GM12878 (cell line): ENCODE measurements at regions of chr4 and their contacts with region 1.

Region 1: GRCh38 chr4:81405894-81406401 is 65.8 kb downstream of the RASGEF1B start:
- DNase-seq: peak; percentile 13
- ATAC-seq: peak; percentile 89
- H3K4me3 ChIP-seq: no peak overlapping the region
- H3K27ac ChIP-seq: no peak overlapping the region
- H3K4me1 ChIP-seq: no peaks in the 10 kb centered on the region
- H3K27me3 ChIP-seq: no peaks in the 10 kb centered on the region
- CTCF ChIP-seq: peak; percentile 39 to 56 (median 48)
- EP300 ChIP-seq: no peak
- POLR2A ChIP-seq: no peak
- RAD21 ChIP-seq: peak; percentile 80

Region 2: GRCh38 chr4:81839347-81840042 is 433.5 kb after region 1 on chr4:
- CTCF ChIA-PET with region 1: interaction called, 5 read pairs
- POLR2A ChIA-PET with region 1: no interaction called
- RAD21 ChIA-PET with region 1: interaction called, 4 read pairs
- SMC1A ChIA-PET with region 1: interaction called, 4 read pairs
- in situ Hi-C with region 1: loop called (anchors 5 kb)
- intact Hi-C with region 1: loop called (anchors 1 kb)
- DNase-seq: no peak
- ATAC-seq: peak; percentile 21; the same call in 1 of the 3 replicates
- H3K4me3 ChIP-seq: no peak overlapping the region
- H3K27ac ChIP-seq: no peak overlapping the region
- H3K4me1 ChIP-seq: no peaks in the 10 kb centered on the region
- H3K27me3 ChIP-seq: no peaks in the 10 kb centered on the region; a peak in 1 of 4 replicates
- CTCF ChIP-seq: no peak
- EP300 ChIP-seq: no peak
- POLR2A ChIP-seq: no peak
- RAD21 ChIP-seq: no peak

Region 3: GRCh38 chr4:81844717-81845116 is 438.8 kb after region 1 on chr4:
- CTCF ChIA-PET with region 1: interaction called, 5 read pairs
- POLR2A ChIA-PET with region 1: no interaction called
- RAD21 ChIA-PET with region 1: interaction called, 4 read pairs
- SMC1A ChIA-PET with region 1: interaction called, 4 read pairs
- in situ Hi-C with region 1: loop called (anchors 5 kb)
- intact Hi-C with region 1: loop called (anchors 1 kb)
- DNase-seq: peak; percentile 12
- ATAC-seq: peak; percentile 93
- H3K4me3 ChIP-seq: no peak overlapping the region
- H3K27ac ChIP-seq: no peak overlapping the region
- H3K4me1 ChIP-seq: no peaks in the 10 kb centered on the region
- H3K27me3 ChIP-seq: no peaks in the 10 kb centered on the region; a peak in 1 of 4 replicates
- CTCF ChIP-seq: peak; percentile 74 to 81 (median 77)
- EP300 ChIP-seq: no peak
- POLR2A ChIP-seq: no peak
- RAD21 ChIP-seq: peak; percentile 90

Region 4: GRCh38 chr4:81919238-81919637 is 513.3 kb after region 1 on chr4:
- CTCF ChIA-PET with region 1: no interaction called
- POLR2A ChIA-PET with region 1: no interaction called
- RAD21 ChIA-PET with region 1: no interaction called
- SMC1A ChIA-PET with region 1: no interaction called
- in situ Hi-C with region 1: no loop called
- intact Hi-C with region 1: loop called (anchors 5 kb)
- DNase-seq: no peak
- ATAC-seq: peak; percentile 93
- H3K4me3 ChIP-seq: no peak overlapping the region
- H3K27ac ChIP-seq: no peak overlapping the region
- H3K4me1 ChIP-seq: no peaks in the 10 kb centered on the region
- H3K27me3 ChIP-seq: no peaks in the 10 kb centered on the region
- CTCF ChIP-seq: peak; percentile 14 to 29 (median 27); a peak in 2 of 6 replicates
- EP300 ChIP-seq: no peak
- POLR2A ChIP-seq: no peak
- RAD21 ChIP-seq: 0 out of 2 replicates have a peak, but pooled peaks have one; percentile 9

Region 5: GRCh38 chr4:82201805-82202641 is 796.1 kb after region 1 on chr4:
- CTCF ChIA-PET with region 1: no interaction called
- POLR2A ChIA-PET with region 1: no interaction called
- RAD21 ChIA-PET with region 1: no interaction called
- SMC1A ChIA-PET with region 1: interaction called, 4 read pairs
- in situ Hi-C with region 1: loop called (anchors 5 kb)
- intact Hi-C with region 1: loop called (anchors 1 kb)
- DNase-seq: no peak
- ATAC-seq: peak; percentile 81
- H3K4me3 ChIP-seq: no peak overlapping the region
- H3K27ac ChIP-seq: no peak overlapping the region
- H3K4me1 ChIP-seq: no peaks in the 10 kb centered on the region
- H3K27me3 ChIP-seq: no peaks in the 10 kb centered on the region
- CTCF ChIP-seq: peak; percentile 56 to 65 (median 60)
- EP300 ChIP-seq: no peak
- POLR2A ChIP-seq: no peak
- RAD21 ChIP-seq: peak; percentile 85

Region 6: DNA sequence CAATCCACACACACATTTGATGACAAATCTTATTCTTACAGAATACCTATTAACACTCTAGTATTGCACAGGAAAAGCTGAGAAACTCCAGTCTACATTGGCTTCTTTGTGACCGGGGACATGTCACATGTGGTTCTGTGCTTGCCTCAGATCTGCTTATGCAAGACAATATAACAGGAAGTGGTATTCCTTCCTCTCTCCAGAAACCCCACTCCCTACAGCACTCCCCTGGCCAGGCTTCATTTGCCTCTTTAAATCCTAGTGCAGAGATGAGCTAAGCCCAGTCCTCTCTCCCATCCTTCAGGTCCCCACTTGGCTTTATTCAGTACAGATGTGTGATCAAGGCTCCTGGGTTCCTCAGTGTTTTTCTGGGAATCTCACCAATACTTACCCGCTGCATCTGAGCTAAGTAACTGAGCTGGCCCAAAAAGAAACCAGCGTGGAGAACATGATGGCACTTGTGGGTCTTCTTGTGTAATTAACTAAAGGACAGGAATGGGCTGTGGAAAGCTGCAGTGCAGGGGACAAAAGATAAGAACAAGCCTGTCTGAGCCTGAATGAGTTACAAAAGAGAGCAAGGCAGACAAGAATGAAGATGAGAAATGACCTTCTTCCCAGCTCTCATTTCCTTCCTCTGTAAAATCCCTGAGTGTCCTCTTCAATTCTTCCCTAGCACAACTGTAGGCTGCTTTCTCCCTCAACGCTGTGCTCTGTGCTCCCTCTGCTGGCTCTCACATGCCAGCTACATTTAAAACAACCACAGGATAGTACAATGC is 862.3 kb after region 1 on chr4:
- CTCF ChIA-PET with region 1: interaction called, 3 read pairs
- POLR2A ChIA-PET with region 1: no interaction called
- RAD21 ChIA-PET with region 1: no interaction called
- SMC1A ChIA-PET with region 1: no interaction called
- in situ Hi-C with region 1: no loop called
- intact Hi-C with region 1: loop called (anchors 5 kb)
- DNase-seq: no peak
- ATAC-seq: peak; percentile 97
- H3K4me3 ChIP-seq: no peak overlapping the region
- H3K27ac ChIP-seq: no peak overlapping the region
- H3K4me1 ChIP-seq: no peaks in the 10 kb centered on the region
- H3K27me3 ChIP-seq: no peaks in the 10 kb centered on the region; a peak in 1 of 4 replicates
- CTCF ChIP-seq: peak; percentile 72 to 85 (median 72)
- EP300 ChIP-seq: no peak
- POLR2A ChIP-seq: no peak
- RAD21 ChIP-seq: peak; percentile 81